ENCODE measurements at regions of chr3 and their contacts with region 1.

Region 1: DNA sequence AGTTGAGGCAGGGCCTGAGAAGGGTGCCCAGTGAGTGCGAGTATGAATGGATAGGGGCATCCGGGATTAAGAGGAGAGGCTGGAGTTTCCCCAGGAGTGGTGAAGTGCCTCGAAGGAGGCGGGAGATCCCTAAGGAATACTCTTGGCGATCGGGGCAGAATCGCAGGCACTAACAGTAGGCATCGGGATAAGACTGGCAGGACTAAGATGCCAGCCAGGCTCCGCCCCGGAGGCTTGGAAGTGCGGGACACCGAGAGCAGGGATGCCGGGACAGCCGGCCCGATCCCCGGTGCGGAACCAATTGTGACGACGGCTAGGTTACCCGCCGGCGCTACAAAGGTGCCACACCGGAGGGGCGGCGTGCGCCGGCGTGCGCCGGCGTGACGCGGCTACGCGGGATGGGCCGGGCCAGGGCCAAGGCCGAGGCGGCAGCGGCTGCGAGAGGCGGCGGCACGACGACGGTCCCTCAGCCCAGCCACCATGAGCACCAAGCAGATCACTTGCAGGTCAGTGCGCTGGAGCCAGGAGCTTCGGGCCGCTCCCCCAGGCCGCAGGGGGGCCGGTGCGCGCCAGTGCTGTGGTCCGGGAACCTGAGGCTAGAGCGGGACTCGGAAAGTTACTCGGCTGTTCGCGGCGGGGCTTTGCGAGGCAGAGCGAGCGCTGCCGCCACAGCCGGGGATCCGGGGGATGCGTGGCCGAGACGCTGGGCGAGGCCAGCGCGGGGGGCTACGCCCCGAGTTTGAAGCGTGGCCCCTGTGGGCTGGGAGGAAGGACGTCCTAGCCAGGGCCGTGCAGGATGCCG is at the start of gene MKRN2:
- DNase-seq: peak; percentile 89
- H3K4me3 Mint-ChIP-seq: peak within 1 kb of the TSS; percentile 73
- H3K27ac Mint-ChIP-seq: peak within 1 kb of the TSS; percentile 65
- H3K4me1 Mint-ChIP-seq: peaks cover 35% of the 10 kb centered on the region
- H3K27me3 Mint-ChIP-seq: no peaks in the 10 kb centered on the region
- CTCF ChIP-seq: no peak
- total RNA-seq, gene MKRN2: 22.0 and 25.6 TPM in 2 replicates

Region 2: DNA sequence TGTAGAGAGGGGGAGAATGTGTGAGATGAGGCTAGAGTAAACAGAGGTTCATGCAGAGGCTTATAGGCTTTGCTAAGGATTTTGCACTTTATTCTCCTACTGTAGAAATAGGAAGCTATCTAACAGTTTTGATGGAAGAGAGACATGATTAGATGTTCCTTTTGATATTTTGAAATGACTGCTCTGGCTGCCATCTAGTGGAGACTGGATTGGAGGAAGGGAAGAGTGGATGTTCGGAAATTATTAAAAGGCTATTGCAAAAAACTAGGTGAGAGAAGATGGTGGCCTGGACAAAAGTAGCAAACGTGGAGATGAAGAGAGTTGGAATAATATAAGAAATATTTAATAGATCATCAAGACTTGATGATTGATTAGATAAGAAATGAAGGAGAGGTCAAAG is 510.5 kb before region 1 on chr3:
- CTCF ChIA-PET with region 1: no interaction called
- POLR2A ChIA-PET with region 1: no interaction called
- intact Hi-C with region 1: no loop called
- DNase-seq: peak; percentile 22
- H3K4me3 Mint-ChIP-seq: no peak overlapping the region
- H3K27ac Mint-ChIP-seq: no peak overlapping the region
- H3K4me1 Mint-ChIP-seq: no peaks in the 10 kb centered on the region
- H3K27me3 Mint-ChIP-seq: peaks cover under 1% of the 10 kb centered on the region
- CTCF ChIP-seq: no peak

Region 3: DNA sequence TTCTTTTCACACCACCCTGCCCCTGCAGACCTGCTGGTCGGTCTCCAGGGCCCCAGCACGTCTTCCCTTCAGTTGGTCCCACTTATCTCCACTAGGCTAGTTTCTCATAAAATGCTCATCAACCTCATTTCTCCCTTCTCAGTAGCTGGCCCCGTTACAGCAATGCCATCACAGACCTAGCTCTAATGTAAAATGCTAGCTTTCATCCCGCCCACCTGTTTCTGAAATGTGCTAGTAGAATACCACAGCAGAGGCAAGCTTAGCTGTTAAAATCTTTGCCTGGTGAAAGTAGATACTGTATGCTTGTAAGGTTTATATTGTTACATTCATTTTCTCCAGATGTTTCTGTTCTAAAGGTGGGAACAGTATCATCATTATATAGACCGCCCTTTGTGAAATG is 24.7 kb before region 1 on chr3:
- CTCF ChIA-PET with region 1: no interaction called
- POLR2A ChIA-PET with region 1: no interaction called
- intact Hi-C with region 1: no loop called
- DNase-seq: no peak
- H3K4me3 Mint-ChIP-seq: no peak overlapping the region
- H3K27ac Mint-ChIP-seq: no peak overlapping the region
- H3K4me1 Mint-ChIP-seq: no peaks in the 10 kb centered on the region
- H3K27me3 Mint-ChIP-seq: no peaks in the 10 kb centered on the region
- CTCF ChIP-seq: no peak

Region 4: GRCh38 chr3:12758025-12758830 is 201.4 kb after region 1 on chr3:
- CTCF ChIA-PET with region 1: no interaction called
- POLR2A ChIA-PET with region 1: interaction called, 11 read pairs
- intact Hi-C with region 1: no loop called
- DNase-seq: peak; percentile 61
- H3K4me3 Mint-ChIP-seq: peak overlapping the region; percentile 43
- H3K27ac Mint-ChIP-seq: peak overlapping the region; percentile 74
- H3K4me1 Mint-ChIP-seq: peaks cover 53% of the 10 kb centered on the region
- H3K27me3 Mint-ChIP-seq: no peaks in the 10 kb centered on the region
- CTCF ChIP-seq: no peak

Region 5: GRCh38 chr3:13073326-13074005 is 516.6 kb after region 1 on chr3 and contains the start of gene IQSEC1:
- CTCF ChIA-PET with region 1: no interaction called
- POLR2A ChIA-PET with region 1: no interaction called
- intact Hi-C with region 1: no loop called
- DNase-seq: no peak
- H3K4me3 Mint-ChIP-seq: no peak within 1 kb of the TSS
- H3K27ac Mint-ChIP-seq: no peak within 1 kb of the TSS
- H3K4me1 Mint-ChIP-seq: no peaks in the 10 kb centered on the region
- H3K27me3 Mint-ChIP-seq: peaks cover 52% of the 10 kb centered on the region
- CTCF ChIP-seq: no peak
- total RNA-seq, gene IQSEC1: 18.7 and 21.2 TPM in 2 replicates

Region 6: DNA sequence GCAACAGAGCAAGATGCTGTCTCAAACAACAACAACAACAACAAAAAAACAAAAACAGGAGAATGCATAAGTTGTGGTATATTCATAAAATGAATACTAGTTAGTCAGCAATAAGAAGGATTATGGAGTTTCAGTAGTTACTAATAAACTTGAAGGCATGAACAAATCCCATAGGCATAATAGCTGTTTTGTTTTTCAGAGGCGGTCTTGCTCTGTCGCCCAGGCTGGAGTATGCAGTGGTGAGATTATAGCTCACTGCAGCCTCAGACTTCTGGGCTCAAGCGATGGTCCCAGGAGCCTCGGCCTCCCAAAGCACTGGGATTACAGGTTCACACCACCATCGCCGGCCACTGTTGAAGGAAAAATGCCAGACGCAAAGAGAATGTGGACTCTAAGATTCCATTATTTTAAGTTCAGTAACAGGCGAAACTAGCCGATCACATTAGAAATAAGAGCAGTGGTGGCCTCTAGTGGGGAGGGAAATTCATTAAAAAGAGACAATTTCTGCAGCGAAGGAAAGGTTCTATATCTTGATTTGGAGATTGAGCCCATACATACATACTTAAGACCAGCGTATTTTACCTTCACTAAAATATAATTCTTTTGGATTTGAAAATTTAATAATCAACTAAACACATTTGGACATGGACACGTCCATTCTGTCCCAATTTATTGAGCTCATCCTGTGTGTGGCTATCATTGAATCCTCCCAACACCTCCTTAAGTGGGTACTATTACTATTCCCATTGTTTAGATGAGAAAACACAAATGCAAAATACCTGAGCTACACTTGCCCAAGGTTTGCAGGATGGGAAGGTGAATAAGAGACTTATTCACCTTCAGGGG is 895.8 kb after region 1 on chr3:
- CTCF ChIA-PET with region 1: no interaction called
- POLR2A ChIA-PET with region 1: no interaction called
- intact Hi-C with region 1: no loop called
- DNase-seq: peak; percentile 74
- H3K4me3 Mint-ChIP-seq: peak overlapping the region; percentile 92
- H3K27ac Mint-ChIP-seq: peak overlapping the region; percentile 94
- H3K4me1 Mint-ChIP-seq: peaks cover 7% of the 10 kb centered on the region
- H3K27me3 Mint-ChIP-seq: no peaks in the 10 kb centered on the region
- CTCF ChIP-seq: peak; percentile 58

Measured in MCF 10A (cell line).